A549 (cell line): ENCODE measurements at regions of chr20 and their contacts with region 1.

Region 1: DNA sequence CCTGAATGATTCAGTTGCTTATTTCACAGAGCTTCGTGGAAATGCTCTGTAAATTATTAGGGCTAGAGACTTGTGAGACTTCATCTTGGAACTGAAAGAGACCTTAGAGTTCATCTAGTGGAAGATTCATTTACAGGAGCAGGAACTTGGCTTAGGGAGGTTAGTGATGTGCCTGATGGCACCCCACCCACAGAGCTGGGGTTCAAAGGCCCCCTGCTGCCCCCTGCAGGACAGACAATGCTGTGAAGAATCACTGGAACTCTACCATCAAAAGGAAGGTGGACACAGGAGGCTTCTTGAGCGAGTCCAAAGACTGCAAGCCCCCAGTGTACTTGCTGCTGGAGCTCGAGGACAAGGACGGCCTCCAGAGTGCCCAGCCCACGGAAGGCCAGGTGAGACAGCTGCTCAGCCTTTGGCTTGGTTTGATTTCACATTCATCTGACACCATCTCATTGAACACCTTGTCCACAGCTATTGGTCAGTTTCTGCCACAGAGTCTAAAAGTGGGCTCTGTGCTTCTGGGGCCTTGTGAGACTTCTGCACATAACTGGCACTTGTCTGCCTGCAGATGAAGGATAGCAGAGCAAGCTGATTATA is 25.1 kb downstream of the MYBL2 start:
- DNase-seq: peak; percentile 61 to 64
- ATAC-seq: peak; percentile 84 to 89
- H3K4me3 ChIP-seq: no peak overlapping the region
- H3K27ac ChIP-seq: no peak overlapping the region
- H3K4me1 ChIP-seq: no peaks in the 10 kb centered on the region
- CTCF ChIP-seq: peak; percentile 71
- EP300 ChIP-seq: no peak
- POLR2A ChIP-seq: no peak
- RAD21 ChIP-seq: peak; percentile 75 to 77

Region 2: GRCh38 chr20:41769592-41770018 is 1922.4 kb before region 1 on chr20:
- CTCF ChIA-PET with region 1: no interaction called
- POLR2A ChIA-PET with region 1: no interaction called
- DNase-seq: no peak
- ATAC-seq: no peak
- H3K4me3 ChIP-seq: no peak overlapping the region
- H3K27ac ChIP-seq: no peak overlapping the region
- H3K4me1 ChIP-seq: no peaks in the 10 kb centered on the region
- CTCF ChIP-seq: no peak
- EP300 ChIP-seq: no peak
- POLR2A ChIP-seq: no peak
- RAD21 ChIP-seq: no peak

Region 3: DNA sequence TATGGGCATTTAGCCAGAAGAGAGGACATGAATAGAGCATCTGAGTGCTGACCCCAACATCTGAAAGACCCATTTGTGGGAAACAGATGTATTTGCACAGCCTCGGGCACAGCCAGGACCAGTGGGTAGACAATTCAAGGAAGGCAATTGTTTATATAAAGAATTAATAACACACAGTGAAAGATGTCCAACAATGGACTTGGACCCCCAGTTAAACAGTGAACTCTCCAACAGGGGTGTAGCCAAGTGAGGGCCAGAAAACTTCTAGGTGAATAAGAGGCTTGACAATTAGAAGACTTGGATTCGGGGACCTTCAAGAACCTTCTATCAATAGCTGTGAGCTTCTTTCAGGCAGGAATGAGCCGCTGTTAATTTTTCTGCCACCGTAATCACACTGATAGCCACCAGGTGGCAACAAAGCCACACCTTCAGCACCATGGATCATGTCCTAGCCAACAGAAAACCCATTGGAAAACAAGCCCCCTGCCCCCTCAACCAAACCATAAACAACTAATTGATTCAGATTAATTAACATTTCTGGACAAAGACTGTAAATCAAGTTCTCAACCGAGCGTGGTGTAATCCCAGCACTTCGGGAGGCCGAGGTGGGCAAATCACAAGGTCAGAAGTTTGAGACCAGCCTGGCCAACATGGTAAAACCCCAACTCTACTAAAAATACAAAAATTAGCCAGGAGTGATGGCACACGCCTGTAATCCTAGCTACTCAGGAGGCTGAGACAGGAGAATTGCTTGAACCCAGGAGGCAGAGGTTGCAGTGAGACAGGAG is 243.1 kb before region 1 on chr20:
- CTCF ChIA-PET with region 1: interaction called, 21 read pairs
- POLR2A ChIA-PET with region 1: no interaction called
- DNase-seq: peak; percentile 56 to 72
- ATAC-seq: peak; percentile 82 to 85
- H3K4me3 ChIP-seq: no peak overlapping the region
- H3K27ac ChIP-seq: no peak overlapping the region
- H3K4me1 ChIP-seq: 0 out of 3 replicates have a peak, but pooled peaks cover 3% of the 10 kb centered on the region
- CTCF ChIP-seq: peak; percentile 83
- EP300 ChIP-seq: no peak
- POLR2A ChIP-seq: no peak
- RAD21 ChIP-seq: peak; percentile 87 to 88

Region 4: GRCh38 chr20:43636429-43636828 is 55.6 kb before region 1 on chr20:
- CTCF ChIA-PET with region 1: no interaction called
- POLR2A ChIA-PET with region 1: no interaction called
- DNase-seq: no peak
- ATAC-seq: no peak
- H3K4me3 ChIP-seq: no peak overlapping the region
- H3K27ac ChIP-seq: no peak overlapping the region
- H3K4me1 ChIP-seq: 0 out of 3 replicates have a peak, but pooled peaks cover 2% of the 10 kb centered on the region
- CTCF ChIP-seq: no peak
- EP300 ChIP-seq: no peak
- POLR2A ChIP-seq: no peak
- RAD21 ChIP-seq: no peak

Region 5: GRCh38 chr20:43681468-43681942 is 10.5 kb before region 1 on chr20:
- CTCF ChIA-PET with region 1: interaction called, 16 read pairs
- POLR2A ChIA-PET with region 1: no interaction called
- DNase-seq: no peak
- ATAC-seq: peak; percentile 43 to 55; a peak in 3 of 6 replicates
- H3K4me3 ChIP-seq: no peak overlapping the region
- H3K27ac ChIP-seq: no peak overlapping the region
- H3K4me1 ChIP-seq: no peaks in the 10 kb centered on the region
- CTCF ChIP-seq: no peak
- EP300 ChIP-seq: no peak
- POLR2A ChIP-seq: no peak
- RAD21 ChIP-seq: no peak

Region 6: GRCh38 chr20:43710370-43711044 is 18.5 kb after region 1 on chr20:
- CTCF ChIA-PET with region 1: interaction called, 19 read pairs
- POLR2A ChIA-PET with region 1: no interaction called
- DNase-seq: no peak
- ATAC-seq: no peak
- H3K4me3 ChIP-seq: no peak overlapping the region
- H3K27ac ChIP-seq: no peak overlapping the region
- H3K4me1 ChIP-seq: no peaks in the 10 kb centered on the region
- CTCF ChIP-seq: no peak
- EP300 ChIP-seq: no peak
- POLR2A ChIP-seq: no peak
- RAD21 ChIP-seq: no peak

Region 7: DNA sequence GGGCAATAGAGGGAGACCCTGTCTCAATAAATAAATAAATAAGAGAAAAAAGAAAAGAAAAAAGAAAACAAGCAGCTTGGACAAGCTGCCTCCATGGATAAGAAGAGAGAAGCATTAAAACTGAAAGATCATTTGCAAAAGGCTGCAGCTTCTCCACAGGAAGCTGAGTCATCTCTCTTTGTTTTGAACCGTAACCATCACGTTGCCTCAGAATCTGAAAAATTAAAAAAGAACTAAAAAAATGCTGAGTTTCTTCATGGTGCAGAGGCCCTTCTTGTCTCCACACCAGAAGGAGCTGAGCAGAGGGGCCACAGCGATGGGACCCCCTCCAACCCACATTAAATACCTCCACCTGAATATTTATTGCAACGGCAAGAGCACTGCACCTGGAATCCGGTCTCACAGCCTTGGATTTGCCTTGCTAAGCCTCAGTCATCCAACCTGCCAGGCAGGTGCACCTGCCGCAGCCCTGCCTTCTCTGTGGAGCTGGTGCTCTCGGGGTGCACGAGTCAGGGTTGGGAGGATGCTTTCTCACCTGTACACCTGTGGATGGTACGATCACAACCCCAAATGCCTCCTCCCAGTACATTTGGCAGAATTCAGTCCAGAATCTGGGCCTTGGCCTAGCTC is 250.8 kb after region 1 on chr20:
- CTCF ChIA-PET with region 1: no interaction called
- POLR2A ChIA-PET with region 1: no interaction called
- DNase-seq: peak in 1 of 2 experiments; percentile 38
- ATAC-seq: no peak
- H3K4me3 ChIP-seq: no peak overlapping the region
- H3K27ac ChIP-seq: peak overlapping the region; percentile 85 to 90
- H3K4me1 ChIP-seq: peaks cover 63% of the 10 kb centered on the region
- CTCF ChIP-seq: no peak
- EP300 ChIP-seq: no peak
- POLR2A ChIP-seq: no peak
- RAD21 ChIP-seq: no peak